ENCODE measurements at regions of chrX and their contacts with region 1.

Region 1: GRCh38 chrX:77899081-77899828 is at the start of gene COX7B:
- DNase-seq: no peak
- ATAC-seq: peak; percentile 71
- H3K4me3 Mint-ChIP-seq: peak within 1 kb of the TSS; percentile 94
- H3K27ac Mint-ChIP-seq: peak within 1 kb of the TSS; percentile 95
- H3K4me1 Mint-ChIP-seq: peaks cover 27% of the 10 kb centered on the region
- H3K27me3 Mint-ChIP-seq: no peaks in the 10 kb centered on the region
- CTCF ChIP-seq: no peak
- total RNA-seq, gene COX7B: 196 and 235 TPM in 2 replicates

Region 2: GRCh38 chrX:76172325-76172893 is 1726.8 kb before region 1 on chrX:
- CTCF ChIA-PET with region 1: no interaction called
- POLR2A ChIA-PET with region 1: no interaction called
- intact Hi-C with region 1: loop called (anchors 2 kb)
- DNase-seq: no peak
- ATAC-seq: peak; percentile 51
- H3K4me3 Mint-ChIP-seq: peak overlapping the region; percentile 97
- H3K27ac Mint-ChIP-seq: peak overlapping the region; percentile 92
- H3K4me1 Mint-ChIP-seq: peaks cover 42% of the 10 kb centered on the region
- H3K27me3 Mint-ChIP-seq: no peaks in the 10 kb centered on the region
- CTCF ChIP-seq: no peak

Region 3: DNA sequence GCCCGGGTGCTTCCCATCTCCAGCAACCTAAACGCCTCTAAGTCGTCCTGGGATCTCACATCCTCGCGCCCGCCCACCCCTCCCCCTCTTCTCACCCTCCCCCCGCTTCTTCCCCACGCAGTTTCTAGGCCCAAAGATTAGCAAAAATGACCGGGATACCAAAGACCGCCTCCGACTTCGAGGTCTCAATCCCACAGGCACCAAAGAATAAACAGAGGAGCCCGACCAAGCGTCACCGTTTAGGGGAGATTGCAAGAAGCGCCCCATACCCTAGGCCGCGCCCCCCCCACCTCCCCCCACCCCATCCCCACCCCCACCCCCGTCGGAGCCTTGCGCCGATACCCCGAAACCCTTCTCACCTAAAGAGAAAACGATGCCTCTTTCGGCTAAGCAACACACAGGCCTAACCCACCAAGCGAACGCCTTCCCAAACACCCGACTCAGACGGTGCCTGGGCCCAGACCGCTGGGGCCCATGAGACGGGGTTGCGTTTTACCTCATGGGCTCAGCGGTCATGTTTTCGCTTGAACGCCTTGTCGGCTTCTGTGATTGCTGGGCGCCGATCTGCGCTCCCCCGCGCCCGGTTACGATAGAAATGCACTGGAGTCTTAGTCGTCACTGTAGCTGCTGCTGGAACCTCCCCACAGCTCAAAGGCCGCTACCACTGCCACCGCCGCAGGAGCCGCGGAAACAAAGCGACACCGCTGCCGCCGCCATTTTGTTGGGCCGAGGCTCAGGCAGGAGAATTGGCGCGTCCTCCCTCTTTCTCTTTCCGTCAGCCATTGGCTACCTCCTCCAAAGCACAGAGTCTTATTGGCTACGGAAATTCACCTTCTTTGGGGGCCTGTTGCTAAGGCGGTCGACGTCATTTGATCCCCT is 113.5 kb before region 1 on chrX and contains the start of gene ATRX:
- CTCF ChIA-PET with region 1: no interaction called
- POLR2A ChIA-PET with region 1: interaction called, 4 read pairs
- intact Hi-C with region 1: loop called (anchors 1 kb)
- DNase-seq: peak; percentile 50
- ATAC-seq: peak; percentile 95
- H3K4me3 Mint-ChIP-seq: peak within 1 kb of the TSS; percentile 99
- H3K27ac Mint-ChIP-seq: peak within 1 kb of the TSS; percentile 100
- H3K4me1 Mint-ChIP-seq: peaks cover 36% of the 10 kb centered on the region
- H3K27me3 Mint-ChIP-seq: no peaks in the 10 kb centered on the region
- CTCF ChIP-seq: no peak
- total RNA-seq, gene ATRX: 114 and 120 TPM in 2 replicates

Region 4: DNA sequence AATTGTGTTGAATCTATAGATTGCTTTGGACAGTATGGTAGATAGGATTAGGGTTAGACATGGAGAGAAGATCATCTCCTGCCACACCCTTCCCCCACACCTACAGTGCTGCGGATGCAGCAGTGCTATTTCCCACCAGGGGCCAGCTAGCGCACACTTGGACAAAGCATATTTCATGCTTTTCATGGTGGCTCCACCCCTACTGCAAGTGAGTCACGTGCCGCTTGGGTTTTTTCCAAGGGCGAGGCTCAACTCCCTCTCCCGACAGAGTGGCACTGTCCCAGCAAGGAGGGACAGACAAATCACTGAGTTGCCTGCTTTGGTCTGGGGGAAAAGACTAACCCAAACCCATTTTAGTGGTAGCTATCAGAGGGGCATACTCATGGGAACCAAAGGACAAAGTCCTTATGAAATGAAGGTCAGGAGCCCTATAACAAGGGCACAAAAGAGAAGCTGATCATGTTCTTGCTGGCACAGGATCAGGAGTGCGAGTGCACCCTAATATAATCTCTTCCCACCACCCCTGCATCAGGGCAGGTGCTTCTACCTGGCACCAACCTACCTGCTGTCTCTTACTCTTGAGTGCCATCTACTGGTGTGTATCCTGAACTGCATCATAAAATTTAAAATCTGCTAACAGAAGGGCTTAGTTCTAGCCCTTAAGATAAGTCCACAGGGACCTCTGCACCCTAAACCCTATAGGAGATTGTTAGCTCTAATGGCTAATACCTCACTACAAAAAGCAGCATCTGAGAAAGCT is 125.3 kb after region 1 on chrX:
- CTCF ChIA-PET with region 1: interaction called, 9 read pairs
- POLR2A ChIA-PET with region 1: no interaction called
- intact Hi-C with region 1: loop called (anchors 5 kb)
- DNase-seq: peak; percentile 12
- ATAC-seq: peak; percentile 60
- H3K4me3 Mint-ChIP-seq: no peak overlapping the region
- H3K27ac Mint-ChIP-seq: no peak overlapping the region
- H3K4me1 Mint-ChIP-seq: no peaks in the 10 kb centered on the region
- H3K27me3 Mint-ChIP-seq: no peaks in the 10 kb centered on the region
- CTCF ChIP-seq: no peak

Region 5: DNA sequence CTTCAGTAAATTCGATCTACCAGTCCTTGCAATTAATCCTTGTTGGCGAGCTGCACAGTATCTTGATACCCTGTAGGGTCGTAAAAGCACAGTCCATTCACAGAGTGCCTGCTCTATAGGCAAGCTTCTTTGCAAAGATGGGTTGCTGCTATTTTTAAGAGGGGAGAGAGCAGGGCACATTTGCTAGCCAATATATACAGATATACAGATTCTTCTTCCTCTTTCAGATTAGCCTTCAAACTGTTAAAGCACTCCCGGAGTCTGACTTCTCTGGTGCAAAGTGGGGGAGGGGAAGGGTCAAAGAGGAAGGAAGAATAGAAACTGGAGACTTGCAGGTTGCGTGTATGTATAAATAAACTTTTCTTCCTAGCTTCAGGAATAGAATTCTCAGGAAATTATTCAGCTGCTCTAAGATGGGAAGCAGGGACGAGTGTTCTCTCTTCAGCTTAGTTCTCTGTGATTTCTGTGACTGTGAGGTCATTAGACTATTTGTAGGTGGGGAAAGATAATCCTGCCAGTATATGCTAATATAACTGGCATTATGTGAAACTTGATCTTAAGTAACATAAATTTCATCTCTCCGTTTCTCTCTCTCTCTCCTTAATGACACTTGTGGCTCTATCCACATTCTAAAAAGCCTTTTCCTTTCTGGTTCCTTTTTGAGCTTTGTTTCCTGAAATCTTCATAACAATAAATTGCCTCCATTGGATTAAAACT is 428.3 kb after region 1 on chrX and contains the start of gene CYSLTR1:
- CTCF ChIA-PET with region 1: no interaction called
- POLR2A ChIA-PET with region 1: interaction called, 3 read pairs
- intact Hi-C with region 1: loop called (anchors 5 kb)
- DNase-seq: no peak
- ATAC-seq: peak; percentile 64
- H3K4me3 Mint-ChIP-seq: peak within 1 kb of the TSS; percentile 89
- H3K27ac Mint-ChIP-seq: peak within 1 kb of the TSS; percentile 94
- H3K4me1 Mint-ChIP-seq: peaks cover 74% of the 10 kb centered on the region
- H3K27me3 Mint-ChIP-seq: no peaks in the 10 kb centered on the region
- CTCF ChIP-seq: no peak
- total RNA-seq, gene CYSLTR1: 20.5 and 20.7 TPM in 2 replicates

Region 6: DNA sequence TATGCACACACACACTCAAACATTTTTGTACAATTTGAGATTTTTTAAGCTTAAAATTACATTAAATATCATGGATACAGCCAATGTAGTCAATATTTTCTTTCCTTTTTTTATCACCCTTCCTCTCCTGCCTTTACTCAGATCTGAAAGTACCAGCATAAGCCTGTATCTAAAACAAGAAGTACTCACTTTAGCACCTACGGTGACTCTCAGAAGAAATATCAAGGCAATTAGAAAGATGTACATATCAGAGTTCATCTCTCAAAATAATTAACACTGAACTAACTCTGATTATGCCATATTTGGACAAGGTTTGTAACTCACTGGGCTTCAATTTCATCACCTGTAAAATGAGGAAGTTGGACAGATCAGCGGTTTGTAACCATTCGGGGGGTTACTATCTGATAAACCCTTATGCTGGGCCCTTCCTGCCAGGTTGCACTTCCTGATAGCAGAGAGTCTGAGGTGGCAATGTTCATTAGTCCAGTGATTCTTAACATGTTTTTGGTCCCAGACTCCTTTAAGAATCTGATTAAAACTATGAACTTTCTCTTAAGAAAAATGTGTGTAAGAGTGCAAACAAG is 1239.5 kb after region 1 on chrX:
- CTCF ChIA-PET with region 1: no interaction called
- POLR2A ChIA-PET with region 1: no interaction called
- intact Hi-C with region 1: loop called (anchors 10 kb)
- DNase-seq: no peak
- ATAC-seq: peak; percentile 89
- H3K4me3 Mint-ChIP-seq: peak overlapping the region; percentile 55
- H3K27ac Mint-ChIP-seq: peak overlapping the region; percentile 91
- H3K4me1 Mint-ChIP-seq: peaks cover 57% of the 10 kb centered on the region
- H3K27me3 Mint-ChIP-seq: no peaks in the 10 kb centered on the region
- CTCF ChIP-seq: no peak